ENCODE measurements at regions of chr12 and their contacts with region 1.

Region 1: GRCh38 chr12:110826592-110827200 is 20.1 kb upstream of the CCDC63 start:
- DNase-seq: peak; percentile 85
- ATAC-seq: peak; percentile 99
- H3K4me3 ChIP-seq: no peak overlapping the region
- H3K27ac ChIP-seq: no peak overlapping the region
- H3K4me1 ChIP-seq: peaks cover 0 to 4% of the 10 kb centered on the region in 2 experiments; a peak in 2 of 4 replicates
- H3K27me3 ChIP-seq: no peaks in the 10 kb centered on the region
- CTCF ChIP-seq: peak; percentile 93 to 99 (median 97)
- POLR2A ChIP-seq: no peak
- RAD21 ChIP-seq: peak; percentile 97

Region 2: GRCh38 chr12:110449799-110450497 is 376.7 kb before region 1 on chr12 and contains the start of gene ARPC3:
- CTCF ChIA-PET with region 1: interaction called, 13 read pairs
- POLR2A ChIA-PET with region 1: interaction called, 3 read pairs
- RAD21 ChIA-PET with region 1: interaction called in 1 of 2 experiments, 6 read pairs
- intact Hi-C with region 1: loop called (anchors 1 kb)
- DNase-seq: peak; percentile 84
- ATAC-seq: peak; percentile 95
- H3K4me3 ChIP-seq: peak within 1 kb of the TSS; percentile 77 to 95
- H3K27ac ChIP-seq: peak within 1 kb of the TSS; percentile 78
- H3K4me1 ChIP-seq: peaks cover 0 to 13% of the 10 kb centered on the region in 2 experiments; a peak in 2 of 4 replicates
- H3K27me3 ChIP-seq: no peaks in the 10 kb centered on the region
- CTCF ChIP-seq: peak; percentile 81 to 87 (median 85)
- POLR2A ChIP-seq: peak; percentile 50
- RAD21 ChIP-seq: peak; percentile 97
- total RNA-seq, gene ARPC3: 115 TPM

Region 3: GRCh38 chr12:110555577-110556406 is 270.9 kb before region 1 on chr12:
- CTCF ChIA-PET with region 1: no interaction called
- POLR2A ChIA-PET with region 1: no interaction called
- RAD21 ChIA-PET with region 1: no interaction called
- intact Hi-C with region 1: loop called (anchors 1 kb)
- DNase-seq: no peak
- ATAC-seq: no peak
- H3K4me3 ChIP-seq: no peak overlapping the region
- H3K27ac ChIP-seq: no peak overlapping the region
- H3K4me1 ChIP-seq: peaks cover 0 to 6% of the 10 kb centered on the region in 2 experiments; a peak in 1 of 4 replicates
- H3K27me3 ChIP-seq: no peaks in the 10 kb centered on the region
- CTCF ChIP-seq: no peak
- POLR2A ChIP-seq: no peak
- RAD21 ChIP-seq: no peak

Region 4: GRCh38 chr12:110704748-110705147 is 121.9 kb before region 1 on chr12:
- CTCF ChIA-PET with region 1: interaction called, 20 read pairs
- POLR2A ChIA-PET with region 1: no interaction called
- RAD21 ChIA-PET with region 1: interaction called in 1 of 2 experiments, 5 read pairs
- intact Hi-C with region 1: loop called (anchors 1 kb)
- DNase-seq: peak; percentile 60
- ATAC-seq: peak; percentile 91
- H3K4me3 ChIP-seq: no peak overlapping the region
- H3K27ac ChIP-seq: no peak overlapping the region
- H3K4me1 ChIP-seq: peaks cover 7 to 18% of the 10 kb centered on the region in 2 experiments
- H3K27me3 ChIP-seq: no peaks in the 10 kb centered on the region
- CTCF ChIP-seq: peak; percentile 68 to 84 (median 80)
- POLR2A ChIP-seq: no peak
- RAD21 ChIP-seq: peak; percentile 75

Region 5: GRCh38 chr12:110742718-110743570 is 83.8 kb before region 1 on chr12 and contains the start of gene PPP1CC:
- CTCF ChIA-PET with region 1: no interaction called
- POLR2A ChIA-PET with region 1: interaction called, 3 read pairs
- RAD21 ChIA-PET with region 1: no interaction called
- intact Hi-C with region 1: loop called (anchors 1 kb)
- DNase-seq: peak; percentile 79
- ATAC-seq: peak; percentile 79
- H3K4me3 ChIP-seq: peak within 1 kb of the TSS; percentile 80 to 89
- H3K27ac ChIP-seq: peak within 1 kb of the TSS; percentile 72
- H3K4me1 ChIP-seq: peaks cover 22 to 45% of the 10 kb centered on the region in 2 experiments
- H3K27me3 ChIP-seq: no peaks in the 10 kb centered on the region
- CTCF ChIP-seq: no peak
- POLR2A ChIP-seq: peak; percentile 53
- RAD21 ChIP-seq: no peak
- total RNA-seq, gene PPP1CC: 248 TPM

Region 6: DNA sequence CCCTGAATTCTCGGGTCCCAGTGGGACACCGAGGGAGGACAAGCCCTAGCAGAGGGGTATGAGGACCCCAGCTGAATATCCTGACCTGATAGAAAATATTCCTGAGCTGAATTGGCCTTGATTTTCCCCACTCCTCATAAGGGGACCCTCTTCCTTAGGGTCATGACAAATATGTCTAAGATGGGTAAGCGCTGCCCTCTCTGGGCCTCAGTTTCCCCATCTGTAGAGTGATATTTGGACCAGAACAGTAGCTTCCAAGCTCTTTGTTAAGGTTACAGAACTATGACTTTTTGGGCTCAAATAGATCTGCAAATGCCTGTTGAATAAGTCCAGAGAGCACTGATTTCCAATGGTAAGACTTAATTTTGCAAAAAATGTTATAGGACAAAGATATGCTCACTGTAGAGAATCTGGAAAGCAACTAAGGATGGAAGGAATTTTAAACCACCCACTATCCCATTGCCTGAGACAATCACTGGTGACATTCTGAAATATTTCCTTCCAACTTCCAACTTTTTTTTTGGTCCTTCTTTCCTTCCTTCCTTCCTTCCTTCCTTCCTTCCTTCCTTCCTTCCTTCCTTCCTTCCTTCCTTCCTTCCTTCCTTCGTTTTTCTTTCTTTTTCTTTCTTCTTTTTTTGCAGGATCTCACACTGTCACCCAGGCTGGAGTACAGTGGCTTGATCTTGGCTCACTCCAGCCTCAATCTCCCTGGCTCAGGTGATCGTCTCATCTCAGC is 61.7 kb after region 1 on chr12:
- CTCF ChIA-PET with region 1: interaction called, 9 read pairs
- POLR2A ChIA-PET with region 1: no interaction called
- RAD21 ChIA-PET with region 1: no interaction called
- intact Hi-C with region 1: loop called (anchors 2 kb)
- DNase-seq: no peak
- ATAC-seq: no peak
- H3K4me3 ChIP-seq: peak overlapping the region in 1 of 2 experiments; percentile 57; a peak in 3 of 4 replicates
- H3K27ac ChIP-seq: no peak overlapping the region
- H3K4me1 ChIP-seq: peaks cover 0 to 14% of the 10 kb centered on the region in 2 experiments; a peak in 2 of 4 replicates
- H3K27me3 ChIP-seq: no peaks in the 10 kb centered on the region
- CTCF ChIP-seq: no peak
- POLR2A ChIP-seq: no peak
- RAD21 ChIP-seq: no peak

Measured in HCT116 (cell line).